Activated CD4-positive, alpha-beta memory T cell treated with anti-CD3 and anti-CD28 coated beads for 36 hours (primary cell): ENCODE measurements at regions of chr6 and their contacts with region 1.

Region 1: GRCh38 chr6:89080542-89081422 is at the start of gene PNRC1:
- DNase-seq: peak; percentile 100
- H3K4me3 Mint-ChIP-seq: peak within 1 kb of the TSS; percentile 93
- H3K27ac Mint-ChIP-seq: peak within 1 kb of the TSS; percentile 99
- H3K4me1 Mint-ChIP-seq: peaks cover 33% of the 10 kb centered on the region
- H3K27me3 Mint-ChIP-seq: no peaks in the 10 kb centered on the region
- total RNA-seq, gene PNRC1: 95.1 TPM

Region 2: DNA sequence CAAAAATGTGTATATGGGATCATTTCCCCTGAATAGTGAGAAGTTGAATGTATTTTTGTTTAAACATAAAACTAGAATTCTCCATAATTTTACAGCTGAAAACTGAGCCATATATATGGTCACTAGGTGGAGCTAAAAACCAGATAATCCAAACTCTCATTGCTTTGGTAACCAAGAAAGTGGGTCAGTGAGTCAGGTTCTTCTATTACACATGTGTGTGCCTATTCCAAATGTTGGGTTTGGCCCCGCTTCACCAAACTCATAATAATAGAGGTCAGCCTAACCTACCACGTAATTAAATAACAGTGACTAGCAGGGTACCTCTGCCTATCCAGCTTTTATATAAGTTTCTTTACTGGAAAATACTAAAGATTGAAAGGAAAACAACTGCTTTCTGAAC is 98.1 kb before region 1 on chr6:
- CTCF ChIA-PET with region 1: interaction called, 36 read pairs
- POLR2A ChIA-PET with region 1: interaction called, 15 read pairs
- intact Hi-C with region 1: loop called (anchors 1 kb)
- DNase-seq: peak; percentile 33
- H3K4me3 Mint-ChIP-seq: no peak overlapping the region
- H3K27ac Mint-ChIP-seq: no peak overlapping the region
- H3K4me1 Mint-ChIP-seq: no peaks in the 10 kb centered on the region
- H3K27me3 Mint-ChIP-seq: no peaks in the 10 kb centered on the region

Region 3: GRCh38 chr6:89098461-89098860 is 17.7 kb after region 1 on chr6:
- CTCF ChIA-PET with region 1: interaction called, 12 read pairs
- POLR2A ChIA-PET with region 1: interaction called, 9 read pairs
- intact Hi-C with region 1: loop called (anchors 1 kb)
- DNase-seq: no peak
- H3K4me3 Mint-ChIP-seq: no peak overlapping the region
- H3K27ac Mint-ChIP-seq: peak overlapping the region; percentile 14
- H3K4me1 Mint-ChIP-seq: peaks cover 11% of the 10 kb centered on the region
- H3K27me3 Mint-ChIP-seq: no peaks in the 10 kb centered on the region

Region 4: DNA sequence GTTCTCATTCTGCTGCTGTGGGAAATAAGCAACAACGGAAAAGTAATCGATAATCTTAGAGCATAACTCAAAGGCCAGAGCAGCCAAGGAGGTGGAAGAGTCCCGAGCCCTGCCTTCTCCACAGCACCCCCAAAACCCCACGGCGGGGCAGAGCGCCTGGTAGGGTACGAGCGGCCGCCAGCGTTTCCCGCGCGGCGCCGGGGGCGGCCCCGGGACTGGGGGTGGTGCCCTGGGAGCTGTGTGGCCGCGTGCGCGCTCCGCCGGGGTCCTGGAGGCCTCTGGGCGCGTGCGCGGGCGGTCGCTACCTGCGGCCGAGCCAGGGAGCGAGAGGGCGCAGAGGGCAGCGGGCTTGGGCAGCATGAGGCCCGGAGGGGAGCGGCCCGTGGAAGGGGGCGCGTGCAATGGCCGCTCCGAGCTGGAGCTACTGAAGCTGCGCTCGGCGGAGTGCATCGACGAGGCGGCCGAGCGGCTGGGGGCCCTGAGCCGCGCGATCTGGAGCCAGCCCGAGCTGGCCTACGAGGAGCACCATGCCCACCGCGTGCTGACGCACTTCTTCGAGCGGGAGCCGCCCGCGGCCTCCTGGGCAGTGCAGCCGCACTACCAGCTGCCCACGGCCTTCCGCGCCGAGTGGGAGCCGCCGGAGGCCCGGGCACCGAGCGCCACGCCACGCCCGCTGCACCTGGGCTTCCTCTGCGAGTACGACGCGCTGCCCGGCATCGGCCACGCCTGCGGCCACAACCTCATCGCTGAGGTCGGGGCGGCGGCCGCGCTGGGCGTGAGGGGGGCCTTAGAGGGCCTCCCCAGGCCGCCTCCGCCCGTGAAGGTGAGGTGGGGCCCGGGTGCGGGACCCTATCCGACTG is 65.2 kb after region 1 on chr6 and contains the start of gene PM20D2:
- CTCF ChIA-PET with region 1: interaction called, 22 read pairs
- POLR2A ChIA-PET with region 1: interaction called, 81 read pairs
- intact Hi-C with region 1: loop called (anchors 1 kb)
- DNase-seq: peak; percentile 71
- H3K4me3 Mint-ChIP-seq: peak within 1 kb of the TSS; percentile 85
- H3K27ac Mint-ChIP-seq: peak within 1 kb of the TSS; percentile 95
- H3K4me1 Mint-ChIP-seq: peaks cover 37% of the 10 kb centered on the region
- H3K27me3 Mint-ChIP-seq: no peaks in the 10 kb centered on the region
- total RNA-seq, gene PM20D2: 8.4 to 8.9 TPM

Region 5: GRCh38 chr6:89352278-89353117 is 271.7 kb after region 1 on chr6 and contains the start of gene UBE2J1:
- CTCF ChIA-PET with region 1: no interaction called
- POLR2A ChIA-PET with region 1: interaction called, 37 read pairs
- intact Hi-C with region 1: loop called (anchors 1 kb)
- DNase-seq: peak; percentile 85
- H3K4me3 Mint-ChIP-seq: peak within 1 kb of the TSS; percentile 91
- H3K27ac Mint-ChIP-seq: peak within 1 kb of the TSS; percentile 84
- H3K4me1 Mint-ChIP-seq: peaks cover 75% of the 10 kb centered on the region
- H3K27me3 Mint-ChIP-seq: no peaks in the 10 kb centered on the region
- total RNA-seq, gene UBE2J1: 23.8 to 24.9 TPM

Region 6: GRCh38 chr6:89638320-89639195 is 557.8 kb after region 1 on chr6 and contains the start of gene LYRM2:
- CTCF ChIA-PET with region 1: no interaction called
- POLR2A ChIA-PET with region 1: interaction called, 3 read pairs
- intact Hi-C with region 1: loop called (anchors 1 kb)
- DNase-seq: peak; percentile 95
- H3K4me3 Mint-ChIP-seq: peak within 1 kb of the TSS; percentile 81
- H3K27ac Mint-ChIP-seq: peak within 1 kb of the TSS; percentile 96
- H3K4me1 Mint-ChIP-seq: peaks cover 32% of the 10 kb centered on the region
- H3K27me3 Mint-ChIP-seq: no peaks in the 10 kb centered on the region
- total RNA-seq, gene LYRM2: 25.5 to 26.4 TPM

Region 7: GRCh38 chr6:90586836-90587638 is 1506.3 kb after region 1 on chr6 and contains the start of gene MAP3K7:
- CTCF ChIA-PET with region 1: no interaction called
- POLR2A ChIA-PET with region 1: no interaction called
- intact Hi-C with region 1: loop called (anchors 2 kb)
- DNase-seq: peak; percentile 97
- H3K4me3 Mint-ChIP-seq: peak within 1 kb of the TSS; percentile 98
- H3K27ac Mint-ChIP-seq: peak within 1 kb of the TSS; percentile 99
- H3K4me1 Mint-ChIP-seq: peaks cover 38% of the 10 kb centered on the region
- H3K27me3 Mint-ChIP-seq: peaks cover 6% of the 10 kb centered on the region
- total RNA-seq, gene MAP3K7: 26.3 to 28.7 TPM